Breast epithelium (tissue), 4 donors: ENCODE measurements at regions of chr16 and their contacts with region 1.

Region 1: GRCh38 chr16:22001591-22001990 is 675 bp upstream of the PDZD9 start:
- DNase-seq: no peak
- H3K4me3 ChIP-seq: no peak overlapping the region
- H3K27ac ChIP-seq: no peak overlapping the region
- H3K4me1 ChIP-seq: peaks cover 0 to 10% of the 10 kb centered on the region in 2 donors
- H3K27me3 ChIP-seq: no peaks in the 10 kb centered on the region
- CTCF ChIP-seq: no peak
- POLR2A ChIP-seq: no peak

Region 2: DNA sequence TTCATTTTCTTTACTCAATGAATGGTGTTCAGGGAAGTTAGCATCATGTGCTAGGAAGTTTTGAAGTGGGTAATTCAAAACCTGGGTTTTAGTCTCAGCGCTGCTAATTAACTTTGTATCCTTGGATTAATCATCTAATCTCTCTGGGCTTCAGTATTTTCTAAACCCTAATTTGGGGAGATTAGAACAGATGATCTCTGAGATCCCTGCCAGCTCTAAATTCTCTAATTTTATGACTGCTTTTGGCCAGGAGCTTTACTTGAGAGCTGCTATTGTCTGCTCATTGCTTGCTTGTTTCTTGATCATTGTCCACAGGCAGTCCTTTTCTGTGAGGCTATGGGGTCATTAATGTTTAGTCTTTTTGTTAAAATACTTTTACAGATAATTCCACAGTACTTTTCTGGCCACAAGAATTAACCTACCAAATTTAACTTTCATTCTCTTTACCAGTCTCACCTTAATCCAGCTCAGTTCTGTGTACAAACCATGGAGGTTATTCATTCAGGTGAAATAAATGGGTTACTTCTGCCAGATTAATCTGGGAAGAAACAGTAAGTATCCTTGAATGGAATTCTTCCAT is 62.4 kb after region 1 on chr16:
- intact Hi-C with region 1: loop called (anchors 10 kb)
- DNase-seq: no peak
- H3K4me3 ChIP-seq: no peak overlapping the region
- H3K27ac ChIP-seq: no peak overlapping the region
- H3K4me1 ChIP-seq: no peaks in the 10 kb centered on the region
- H3K27me3 ChIP-seq: no peaks in the 10 kb centered on the region
- CTCF ChIP-seq: no peak
- POLR2A ChIP-seq: no peak

Region 3: GRCh38 chr16:22188595-22189442 is 187.2 kb after region 1 on chr16:
- intact Hi-C with region 1: loop called (anchors 5 kb)
- DNase-seq: peak; percentile 65 to 79
- H3K4me3 ChIP-seq: peak overlapping the region in 2 of 3 donors; percentile 68 to 90
- H3K27ac ChIP-seq: peak overlapping the region; percentile 97 to 98
- H3K4me1 ChIP-seq: peaks cover 9 to 11% of the 10 kb centered on the region in 2 donors
- H3K27me3 ChIP-seq: no peaks in the 10 kb centered on the region
- CTCF ChIP-seq: peak; percentile 69 to 91 (median 88)
- POLR2A ChIP-seq: no peak

Region 4: GRCh38 chr16:22240023-22240710 is 238.6 kb after region 1 on chr16:
- intact Hi-C with region 1: no loop called
- DNase-seq: no peak
- H3K4me3 ChIP-seq: no peak overlapping the region
- H3K27ac ChIP-seq: peak overlapping the region; percentile 59 to 70
- H3K4me1 ChIP-seq: peaks cover 4 to 9% of the 10 kb centered on the region in 2 donors
- H3K27me3 ChIP-seq: no peaks in the 10 kb centered on the region
- CTCF ChIP-seq: no peak
- POLR2A ChIP-seq: no peak